A673 (cell line): ENCODE measurements at regions of chr18 and their contacts with region 1.

Region 1: GRCh38 chr18:52339891-52340371 is at the start of gene DCC:
- DNase-seq: peak; percentile 98
- H3K4me3 ChIP-seq: peak within 1 kb of the TSS; percentile 96
- H3K27ac ChIP-seq: peak within 1 kb of the TSS; percentile 94
- H3K4me1 ChIP-seq: peaks cover 17% of the 10 kb centered on the region
- H3K27me3 ChIP-seq: no peaks in the 10 kb centered on the region
- CTCF ChIP-seq: peak; percentile 72
- total RNA-seq, gene DCC: 93.0 and 99.5 TPM in 2 replicates

Region 2: GRCh38 chr18:52387175-52387574 is 47.2 kb after region 1 on chr18:
- CTCF ChIA-PET with region 1: interaction called, 5 read pairs
- POLR2A ChIA-PET with region 1: interaction called, 6 read pairs
- intact Hi-C with region 1: loop called (anchors 1 kb)
- DNase-seq: peak; percentile 93
- H3K4me3 ChIP-seq: no peak overlapping the region
- H3K27ac ChIP-seq: peak overlapping the region; percentile 98
- H3K4me1 ChIP-seq: peaks cover 95% of the 10 kb centered on the region
- H3K27me3 ChIP-seq: no peaks in the 10 kb centered on the region
- CTCF ChIP-seq: no peak

Region 3: GRCh38 chr18:52499644-52500043 is 159.7 kb after region 1 on chr18:
- CTCF ChIA-PET with region 1: no interaction called
- POLR2A ChIA-PET with region 1: no interaction called
- intact Hi-C with region 1: loop called (anchors 1 kb)
- DNase-seq: peak; percentile 94
- H3K4me3 ChIP-seq: no peak overlapping the region
- H3K27ac ChIP-seq: peak overlapping the region; percentile 54
- H3K4me1 ChIP-seq: peaks cover 59% of the 10 kb centered on the region
- H3K27me3 ChIP-seq: no peaks in the 10 kb centered on the region
- CTCF ChIP-seq: no peak

Region 4: DNA sequence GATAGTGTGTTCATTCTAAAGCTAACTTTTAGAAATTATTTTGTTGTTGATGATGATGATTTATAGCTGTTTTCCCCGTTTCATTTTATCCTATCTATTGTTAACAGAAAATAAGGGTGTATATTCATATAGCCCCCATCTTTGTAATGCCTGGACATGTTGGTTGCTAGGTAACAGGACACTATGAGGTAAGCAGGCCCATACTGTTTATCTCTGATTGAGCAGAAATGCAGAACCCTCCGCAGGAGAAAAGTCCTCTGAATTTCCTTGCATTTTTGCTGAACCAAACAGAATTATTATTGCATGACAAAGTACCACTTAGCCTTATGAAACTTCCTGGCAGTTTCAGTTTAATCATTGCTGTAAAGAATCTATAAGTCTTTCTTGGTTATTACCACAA is 339.4 kb after region 1 on chr18:
- CTCF ChIA-PET with region 1: interaction called, 3 read pairs
- POLR2A ChIA-PET with region 1: no interaction called
- intact Hi-C with region 1: loop called (anchors 5 kb)
- DNase-seq: peak; percentile 73
- H3K4me3 ChIP-seq: no peak overlapping the region
- H3K27ac ChIP-seq: peak overlapping the region; percentile 67
- H3K4me1 ChIP-seq: peaks cover 77% of the 10 kb centered on the region
- H3K27me3 ChIP-seq: no peaks in the 10 kb centered on the region
- CTCF ChIP-seq: no peak

Region 5: GRCh38 chr18:52888014-52888413 is 548.1 kb after region 1 on chr18:
- CTCF ChIA-PET with region 1: no interaction called
- POLR2A ChIA-PET with region 1: no interaction called
- intact Hi-C with region 1: loop called (anchors 5 kb)
- DNase-seq: peak; percentile 96
- H3K4me3 ChIP-seq: no peak overlapping the region
- H3K27ac ChIP-seq: peak overlapping the region; percentile 68
- H3K4me1 ChIP-seq: peaks cover 73% of the 10 kb centered on the region
- H3K27me3 ChIP-seq: no peaks in the 10 kb centered on the region
- CTCF ChIP-seq: no peak

Region 6: DNA sequence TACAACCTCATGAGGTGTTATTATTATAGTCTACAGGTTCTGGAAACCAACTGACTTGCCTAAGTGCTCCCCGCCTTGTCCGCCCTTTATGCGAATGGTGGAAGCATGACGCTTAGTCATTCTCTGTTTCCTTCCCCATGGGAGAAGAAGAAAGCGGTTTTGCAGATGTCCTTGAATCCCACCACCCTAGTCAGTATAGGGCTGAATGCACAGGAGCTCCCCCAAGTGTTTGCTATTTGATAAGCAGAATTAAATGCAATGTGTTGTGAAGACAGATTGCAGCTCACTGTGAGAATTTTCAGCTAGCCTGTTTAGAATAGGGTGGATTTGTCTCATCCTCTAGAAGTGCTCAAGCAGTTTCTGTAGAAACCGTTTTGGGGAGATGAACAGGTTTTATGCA is 652.1 kb after region 1 on chr18:
- CTCF ChIA-PET with region 1: no interaction called
- POLR2A ChIA-PET with region 1: no interaction called
- intact Hi-C with region 1: loop called (anchors 5 kb)
- DNase-seq: peak; percentile 92
- H3K4me3 ChIP-seq: no peak overlapping the region
- H3K27ac ChIP-seq: no peak overlapping the region
- H3K4me1 ChIP-seq: peaks cover 24% of the 10 kb centered on the region
- H3K27me3 ChIP-seq: no peaks in the 10 kb centered on the region
- CTCF ChIP-seq: peak; percentile 81